Activated T-helper 2 cell treated with anti-CD3 and anti-CD28 coated beads, Interferon-gamma antibody, Interleukin-2, Interleukin-4, amounts not matched to agents 10 μg/mL and 5 μg/mL and 100 μg/mL, durations not matched to agents 14 hours and 24 hours and 36 hours (primary cell): ENCODE measurements at regions of chr16 and their contacts with region 1.

Region 1: DNA sequence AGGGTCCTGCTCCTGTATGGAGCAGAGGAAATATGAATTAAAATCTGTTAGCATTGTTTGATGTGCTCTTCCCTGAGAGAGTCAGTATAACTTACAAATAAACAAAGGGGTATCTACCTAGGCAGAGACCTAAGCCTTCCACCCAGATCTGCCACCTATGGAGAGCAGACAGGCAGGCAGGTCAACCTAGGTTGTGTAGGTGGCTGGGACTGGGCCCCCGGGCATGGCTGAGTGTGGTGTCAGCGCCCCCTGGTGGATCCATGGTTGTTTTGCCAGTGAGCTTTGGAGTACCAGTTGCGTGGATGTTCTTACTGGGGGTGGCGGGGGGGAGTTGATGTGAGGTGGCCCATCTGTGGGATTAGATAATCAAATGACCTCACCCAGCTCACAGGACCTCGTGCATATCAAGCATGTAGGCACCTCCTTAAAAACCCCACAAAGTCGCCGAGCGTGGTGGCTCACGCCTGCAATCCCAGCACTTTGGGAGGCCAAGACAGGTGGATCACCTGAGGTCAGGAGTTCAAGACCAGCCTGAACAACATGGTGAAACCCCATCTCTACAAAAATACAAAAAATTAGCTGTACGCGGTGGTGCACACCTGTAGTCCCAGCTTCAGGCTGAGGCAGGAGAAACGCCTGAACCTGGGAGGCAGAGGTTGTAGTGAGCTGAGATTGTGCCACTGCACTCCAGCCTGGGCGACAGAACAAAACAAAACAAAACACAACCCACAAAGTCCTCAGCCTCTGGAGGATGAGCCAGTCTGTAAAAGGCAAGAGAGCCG is 17.6 kb downstream of the DUS2 start:
- DNase-seq: peak; percentile 82
- H3K4me3 Mint-ChIP-seq: no peak overlapping the region
- H3K27ac Mint-ChIP-seq: peak overlapping the region; percentile 39
- H3K4me1 Mint-ChIP-seq: peaks cover 11% of the 10 kb centered on the region
- H3K27me3 Mint-ChIP-seq: no peaks in the 10 kb centered on the region

Region 2: DNA sequence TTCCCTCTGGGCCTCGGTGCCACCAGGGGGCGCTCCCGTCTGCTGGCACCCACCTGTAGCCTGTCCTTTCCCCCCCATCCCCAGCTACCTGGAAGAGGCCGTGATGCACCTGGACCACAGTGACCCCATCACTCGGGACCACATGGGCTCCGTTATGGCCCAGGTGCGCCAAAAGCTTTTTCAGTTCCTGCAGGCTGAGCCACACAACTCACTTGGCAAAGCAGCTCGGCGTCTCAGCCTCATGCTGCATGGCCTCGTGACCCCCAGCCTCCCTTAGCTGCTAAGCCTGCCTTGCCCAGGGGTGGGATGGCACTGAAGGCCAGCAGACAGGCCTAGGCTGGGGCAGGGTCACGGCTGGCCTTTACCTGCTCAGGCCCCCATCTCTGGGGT is 156.8 kb before region 1 on chr16:
- intact Hi-C with region 1: loop called (anchors 1 kb)
- DNase-seq: peak; percentile 52
- H3K4me3 Mint-ChIP-seq: no peak overlapping the region
- H3K27ac Mint-ChIP-seq: no peak overlapping the region
- H3K4me1 Mint-ChIP-seq: no peaks in the 10 kb centered on the region
- H3K27me3 Mint-ChIP-seq: no peaks in the 10 kb centered on the region

Region 3: DNA sequence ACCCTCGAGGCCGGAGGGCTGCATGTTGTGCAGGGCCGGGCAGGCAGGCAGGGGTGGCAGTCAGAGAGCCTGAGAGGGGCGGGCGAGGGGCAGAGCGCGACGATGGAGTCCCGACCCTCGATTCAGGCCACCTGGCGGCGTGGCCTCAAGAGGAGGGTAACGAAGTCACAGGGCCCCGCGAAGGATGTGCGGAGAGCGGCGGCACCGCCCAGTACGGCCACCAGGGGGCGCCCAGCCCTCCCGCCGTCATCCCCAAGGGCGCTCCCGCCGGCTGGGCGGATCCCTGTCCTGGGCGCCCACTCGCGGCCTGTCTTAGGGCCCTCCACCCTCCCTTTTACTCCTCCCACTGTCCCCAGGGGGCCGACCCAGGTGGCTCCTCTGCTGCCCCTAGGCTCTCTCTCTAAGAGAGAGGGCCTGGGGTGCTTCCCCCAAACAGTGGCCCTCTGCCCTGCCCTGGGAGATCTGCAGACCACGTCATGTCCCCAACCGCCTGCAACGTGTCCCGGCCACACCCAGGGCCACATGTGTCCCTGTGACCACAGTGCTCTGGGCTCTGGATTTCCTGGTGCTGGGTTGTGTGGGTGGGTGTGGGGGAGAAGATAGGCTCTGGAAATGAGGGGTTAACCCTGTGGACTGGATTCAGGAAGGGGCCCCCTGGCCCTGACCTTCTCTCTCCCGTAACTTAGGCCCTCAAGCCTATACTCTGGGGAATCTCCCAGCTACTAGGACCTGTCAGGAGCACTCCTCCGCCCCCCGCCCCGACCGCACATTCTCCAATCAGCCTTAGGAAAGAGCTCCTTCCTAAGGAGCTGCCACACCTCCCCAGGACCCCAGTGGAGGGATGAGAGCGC is 47.3 kb before region 1 on chr16:
- intact Hi-C with region 1: loop called (anchors 1 kb)
- DNase-seq: peak; percentile 80
- H3K4me3 Mint-ChIP-seq: peak overlapping the region; percentile 79
- H3K27ac Mint-ChIP-seq: peak overlapping the region; percentile 99
- H3K4me1 Mint-ChIP-seq: peaks cover 30% of the 10 kb centered on the region
- H3K27me3 Mint-ChIP-seq: no peaks in the 10 kb centered on the region

Region 4: GRCh38 chr16:68328151-68328859 is 287.6 kb after region 1 on chr16:
- intact Hi-C with region 1: no loop called
- DNase-seq: peak; percentile 73
- H3K4me3 Mint-ChIP-seq: no peak overlapping the region
- H3K27ac Mint-ChIP-seq: peak overlapping the region; percentile 62
- H3K4me1 Mint-ChIP-seq: peaks cover 32% of the 10 kb centered on the region
- H3K27me3 Mint-ChIP-seq: no peaks in the 10 kb centered on the region